PC-9 (cell line): ENCODE measurements at regions of chr17 and their contacts with region 1.

Region 1: DNA sequence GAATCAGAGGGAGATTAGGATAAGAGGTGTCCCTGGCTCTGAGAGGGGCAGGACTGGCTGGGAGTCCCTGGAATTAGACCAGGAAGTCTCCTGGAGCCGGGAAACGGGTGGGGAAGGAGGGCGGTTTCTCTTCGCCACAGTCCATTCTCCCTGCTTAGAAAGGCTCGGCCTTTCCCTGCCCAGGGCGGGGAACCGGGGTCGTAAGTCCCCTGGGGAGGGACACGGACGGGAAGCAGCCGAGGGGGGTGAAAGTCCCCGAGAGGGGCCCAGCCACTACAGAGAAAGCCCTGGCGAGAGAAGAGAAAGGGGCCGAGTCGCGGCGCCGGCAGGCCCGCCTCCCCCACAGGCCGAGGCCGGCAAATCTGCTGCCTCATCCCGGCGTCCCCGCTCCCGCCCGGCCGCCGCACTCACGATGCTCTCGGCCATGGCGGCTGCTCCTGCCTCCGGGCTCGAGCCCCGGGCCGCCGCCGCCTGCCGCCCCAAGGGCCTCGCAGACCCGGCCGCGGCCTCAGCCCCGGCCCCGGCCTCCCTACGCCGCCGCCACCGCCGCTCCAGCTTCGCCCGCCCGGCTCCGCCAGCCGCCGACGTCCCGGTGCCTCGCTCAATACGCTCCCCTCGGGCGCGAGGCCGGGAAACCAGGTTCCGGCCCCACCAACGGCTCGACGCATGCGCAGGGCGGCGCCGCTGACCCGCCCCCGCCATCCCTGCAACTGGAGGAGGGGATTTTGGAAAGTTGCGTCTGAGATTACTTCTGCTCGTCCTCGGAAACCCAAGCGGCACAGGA is at the starts of genes NPLOC4 and TSPAN10:
- DNase-seq: peak; percentile 41 to 92
- H3K4me3 ChIP-seq: peak within 1 kb of the TSS; percentile 96
- H3K27ac ChIP-seq: peak within 1 kb of the TSS; percentile 71
- H3K4me1 ChIP-seq: peaks cover 11% of the 10 kb centered on the region; the same call in 1 of the 2 replicates
- H3K27me3 ChIP-seq: no peaks in the 10 kb centered on the region
- CTCF ChIP-seq: no peak
- total RNA-seq, gene NPLOC4: 154 and 208 TPM in 2 replicates
- total RNA-seq, gene TSPAN10: 8.6 and 15.0 TPM in 2 replicates

Region 2: DNA sequence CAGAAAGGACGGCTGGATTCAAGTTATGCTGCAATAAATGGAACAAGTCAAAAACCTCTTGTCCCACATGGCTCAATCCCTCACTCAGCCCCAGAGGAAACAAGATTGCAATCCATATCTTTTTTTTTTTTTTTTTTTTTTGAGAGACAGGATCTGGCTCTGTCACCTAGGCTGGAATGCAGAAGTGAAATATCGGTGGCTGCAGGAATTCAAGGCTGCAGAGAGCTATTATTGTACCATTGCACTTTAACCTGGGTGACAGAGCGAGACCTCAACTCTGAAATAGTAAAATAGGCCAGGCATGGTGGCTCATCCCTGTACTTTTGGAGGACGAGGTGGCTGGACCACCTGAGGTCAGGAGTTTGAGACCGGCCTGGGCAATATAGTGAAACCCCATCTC is 22.3 kb after region 1 on chr17:
- CTCF ChIA-PET with region 1: no interaction called
- POLR2A ChIA-PET with region 1: interaction called, 23 read pairs
- intact Hi-C with region 1: no loop called
- DNase-seq: peak; percentile 51 to 68
- H3K4me3 ChIP-seq: peak overlapping the region; percentile 15; the same call in 1 of the 2 replicates
- H3K27ac ChIP-seq: peak overlapping the region; percentile 65
- H3K4me1 ChIP-seq: peaks cover 21% of the 10 kb centered on the region
- H3K27me3 ChIP-seq: no peaks in the 10 kb centered on the region
- CTCF ChIP-seq: no peak

Region 3: GRCh38 chr17:81666342-81667191 is 29.9 kb after region 1 on chr17 and contains the starts of genes CCDC137 and OXLD1:
- CTCF ChIA-PET with region 1: no interaction called
- POLR2A ChIA-PET with region 1: no interaction called
- intact Hi-C with region 1: loop called (anchors 1 kb)
- DNase-seq: peak; percentile 81 to 96
- H3K4me3 ChIP-seq: peak within 1 kb of the TSS; percentile 86
- H3K27ac ChIP-seq: peak within 1 kb of the TSS; percentile 19; the same call in 1 of the 2 replicates
- H3K4me1 ChIP-seq: peaks cover 10% of the 10 kb centered on the region
- H3K27me3 ChIP-seq: no peaks in the 10 kb centered on the region
- CTCF ChIP-seq: no peak
- total RNA-seq, gene CCDC137: 29.3 and 30.0 TPM in 2 replicates
- total RNA-seq, gene OXLD1: 40.2 and 66.0 TPM in 2 replicates

Region 4: DNA sequence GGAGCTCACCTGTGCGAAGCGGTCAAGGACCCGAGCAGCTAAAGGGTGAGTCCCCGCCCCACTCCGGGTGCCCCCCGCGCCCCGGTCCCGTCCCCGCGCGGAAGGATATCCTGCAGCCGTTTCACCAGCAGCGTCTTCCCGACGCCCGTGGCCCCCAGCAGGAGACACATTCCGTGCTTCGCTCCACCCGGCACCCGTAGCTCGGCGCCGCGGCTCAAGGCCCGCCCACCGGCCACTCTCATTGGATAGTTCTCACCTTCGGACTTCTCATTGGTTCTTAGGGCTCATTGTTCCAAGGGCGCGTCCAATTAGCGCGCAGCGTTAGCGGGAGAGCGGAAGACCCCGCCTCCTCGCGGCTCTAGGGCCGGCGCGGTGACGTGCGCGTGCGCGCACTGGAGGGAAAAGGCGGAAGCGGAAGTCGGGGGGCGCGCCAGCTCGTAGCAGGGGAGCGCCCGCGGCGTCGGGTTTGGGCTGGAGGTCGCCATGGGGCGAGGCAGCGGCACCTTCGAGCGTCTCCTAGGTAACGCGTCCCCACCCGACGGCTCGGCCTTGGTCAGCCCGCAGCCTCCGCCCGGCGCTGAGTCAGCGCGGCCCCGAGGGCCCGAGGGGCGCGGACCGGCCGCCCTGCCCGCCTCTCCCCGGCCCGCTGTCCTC is 47.0 kb after region 1 on chr17 and contains the starts of genes ARL16 and HGS:
- CTCF ChIA-PET with region 1: no interaction called
- POLR2A ChIA-PET with region 1: no interaction called
- intact Hi-C with region 1: loop called (anchors 5 kb)
- DNase-seq: peak; percentile 90 to 99
- H3K4me3 ChIP-seq: peak within 1 kb of the TSS; percentile 93
- H3K27ac ChIP-seq: peak within 1 kb of the TSS; percentile 78
- H3K4me1 ChIP-seq: peaks cover 5% of the 10 kb centered on the region
- H3K27me3 ChIP-seq: no peaks in the 10 kb centered on the region
- CTCF ChIP-seq: no peak
- total RNA-seq, gene ARL16: 41.7 and 48.3 TPM in 2 replicates
- total RNA-seq, gene HGS: 149 and 166 TPM in 2 replicates

Region 5: DNA sequence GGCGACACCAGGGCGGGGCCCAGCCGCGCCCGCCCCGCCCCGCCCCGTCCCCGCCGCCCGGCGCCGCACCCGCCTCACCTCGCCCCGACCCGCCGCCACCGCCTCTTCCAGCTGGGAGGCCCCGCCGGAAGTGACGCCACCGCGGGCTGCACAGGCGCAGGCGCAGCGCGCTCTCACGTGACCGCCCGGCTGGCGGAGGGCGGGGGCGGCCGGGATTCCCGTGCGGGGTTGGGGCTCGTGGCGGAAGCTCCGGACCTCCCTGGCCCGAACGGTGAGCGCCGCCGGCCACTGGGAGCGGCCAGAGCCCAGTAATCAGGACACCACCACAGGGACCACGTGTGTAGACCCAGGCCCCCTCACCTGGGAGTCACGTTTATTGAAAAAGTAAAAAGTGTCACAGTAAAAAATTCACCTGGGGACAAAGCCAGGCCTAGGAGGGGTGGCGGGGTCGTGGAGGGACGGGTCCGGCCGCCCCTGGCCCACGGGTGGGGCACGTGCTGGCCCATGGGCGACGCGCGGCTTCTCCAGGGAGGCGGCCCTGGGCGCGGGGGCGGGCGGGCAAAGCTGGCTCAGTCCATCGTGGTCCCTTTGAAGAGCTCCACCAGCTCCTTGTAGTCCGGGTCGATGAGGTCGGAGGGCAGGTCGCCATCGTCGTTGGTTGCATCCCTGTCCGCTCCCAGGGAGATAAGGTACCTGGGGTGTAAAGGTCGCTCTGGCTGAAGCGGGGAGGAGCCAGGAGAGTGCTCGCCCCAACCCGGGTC is 196.6 kb after region 1 on chr17 and contains the start of gene MCRIP1:
- CTCF ChIA-PET with region 1: no interaction called
- POLR2A ChIA-PET with region 1: no interaction called
- intact Hi-C with region 1: no loop called
- DNase-seq: peak; percentile 75 to 98
- H3K4me3 ChIP-seq: peak within 1 kb of the TSS; percentile 81
- H3K27ac ChIP-seq: peak within 1 kb of the TSS; percentile 68
- H3K4me1 ChIP-seq: no peaks in the 10 kb centered on the region
- H3K27me3 ChIP-seq: no peaks in the 10 kb centered on the region
- CTCF ChIP-seq: no peak
- total RNA-seq, gene MCRIP1: 53.8 and 84.0 TPM in 2 replicates